ENCODE measurements at regions of chr10 and their contacts with region 1.

Region 1: DNA sequence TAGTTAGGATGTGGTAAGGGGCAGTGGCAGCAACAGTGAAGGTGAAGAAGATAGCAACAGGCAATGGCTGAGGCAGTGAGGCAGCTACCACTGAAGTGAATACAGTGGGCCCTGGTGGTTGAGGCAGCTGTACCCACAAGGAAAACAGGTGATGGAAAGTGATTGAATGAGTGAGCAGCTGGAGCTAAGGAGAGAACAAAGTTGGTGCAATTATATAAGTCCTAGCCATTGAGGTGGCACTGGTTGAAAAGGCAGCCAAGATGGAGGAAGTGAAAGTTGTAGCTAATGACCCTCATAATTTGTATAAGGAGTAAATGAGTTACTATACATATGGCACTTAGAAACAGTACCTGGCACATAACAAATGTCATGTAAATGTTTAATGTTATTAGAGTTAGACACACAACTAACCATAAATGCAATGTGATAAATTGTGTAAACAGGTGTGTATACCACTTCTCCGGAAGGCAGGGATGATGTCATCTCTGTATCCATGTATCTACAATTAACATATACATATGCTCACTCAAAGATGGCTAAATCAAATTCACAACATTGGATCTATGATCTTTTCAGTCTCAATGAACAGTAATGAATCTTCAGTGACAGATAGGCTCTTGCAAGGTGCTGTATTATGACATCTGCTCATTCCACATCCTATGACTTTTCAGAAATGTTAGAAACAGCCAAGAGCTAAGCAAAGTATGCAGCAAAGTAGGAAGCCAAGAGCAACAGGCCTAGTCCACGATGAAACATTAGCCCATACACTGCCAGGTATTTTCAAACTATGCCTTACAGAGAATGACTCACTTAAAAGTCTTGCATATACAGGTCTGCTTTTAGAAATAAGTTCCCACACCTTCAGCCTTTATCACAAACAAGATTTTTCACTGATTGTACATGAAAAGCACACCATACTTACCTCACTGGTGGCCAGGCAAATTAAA is 10.7 kb downstream of the XPNPEP1 start:
- DNase-seq: no peak
- ATAC-seq: no peak
- H3K4me3 ChIP-seq: no peak overlapping the region
- H3K27ac ChIP-seq: no peak overlapping the region
- H3K4me1 ChIP-seq: no peaks in the 10 kb centered on the region
- H3K27me3 ChIP-seq: no peaks in the 10 kb centered on the region
- CTCF ChIP-seq: no peak

Region 2: DNA sequence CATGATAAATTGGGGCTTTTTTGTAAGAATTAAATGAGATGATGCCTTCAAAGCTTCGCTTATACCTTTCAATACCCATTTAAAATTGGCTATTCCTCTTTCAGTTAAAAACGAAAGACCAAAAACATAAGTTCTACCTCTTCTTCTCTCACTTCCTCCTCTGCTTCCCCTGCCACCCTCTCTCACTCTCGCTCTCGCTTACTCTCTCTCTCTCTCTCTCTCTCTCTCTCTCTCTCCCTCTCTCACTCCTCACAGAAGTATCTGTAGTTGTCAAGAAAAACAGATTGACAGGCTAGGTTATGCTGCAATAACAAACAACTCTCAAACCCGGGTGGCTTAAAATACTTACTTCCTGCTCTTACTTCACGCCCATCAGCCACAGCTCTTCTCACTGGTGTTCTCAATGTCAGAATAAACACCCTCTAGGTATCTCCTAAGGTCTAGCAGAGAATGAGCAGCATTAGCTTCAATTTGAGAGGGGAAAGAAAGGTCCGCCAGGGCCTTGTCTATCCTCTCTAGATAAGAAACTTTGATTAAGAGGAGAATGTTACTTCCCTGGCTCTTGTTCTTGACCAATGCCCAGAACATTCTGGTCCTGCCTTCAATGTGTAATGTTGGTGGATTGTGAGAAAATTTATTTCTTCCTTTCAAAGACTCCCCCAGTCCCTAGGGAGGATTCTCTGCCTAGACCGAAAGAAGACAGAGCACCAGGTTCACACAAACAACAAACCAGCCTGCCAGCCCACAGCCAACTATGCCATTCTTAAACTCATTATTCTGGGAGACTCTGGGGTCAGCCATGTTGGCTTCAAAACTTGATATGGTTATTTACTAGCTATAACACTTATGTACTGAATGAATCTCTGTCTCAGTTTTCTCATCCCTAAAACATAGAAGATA is 1018.0 kb before region 1 on chr10:
- CTCF ChIA-PET with region 1: no interaction called
- POLR2A ChIA-PET with region 1: no interaction called
- in situ Hi-C with region 1: no loop called
- intact Hi-C with region 1: no loop called
- DNase-seq: no peak
- ATAC-seq: no peak
- H3K4me3 ChIP-seq: no peak overlapping the region
- H3K27ac ChIP-seq: no peak overlapping the region
- H3K4me1 ChIP-seq: no peaks in the 10 kb centered on the region
- H3K27me3 ChIP-seq: no peaks in the 10 kb centered on the region
- CTCF ChIP-seq: no peak

Region 3: GRCh38 chr10:109922976-109923921 is 10.6 kb after region 1 on chr10 and contains the start of gene XPNPEP1:
- CTCF ChIA-PET with region 1: no interaction called
- POLR2A ChIA-PET with region 1: no interaction called
- in situ Hi-C with region 1: no loop called
- intact Hi-C with region 1: no loop called
- DNase-seq: no peak
- ATAC-seq: peak; percentile 99
- H3K4me3 ChIP-seq: peak within 1 kb of the TSS; percentile 79 to 96
- H3K27ac ChIP-seq: peak within 1 kb of the TSS; percentile 91
- H3K4me1 ChIP-seq: peaks cover 12% of the 10 kb centered on the region
- H3K27me3 ChIP-seq: no peaks in the 10 kb centered on the region
- CTCF ChIP-seq: no peak
- total RNA-seq, gene XPNPEP1: 61.2 TPM

Region 4: GRCh38 chr10:110802090-110802489 is 889.5 kb after region 1 on chr10:
- CTCF ChIA-PET with region 1: no interaction called
- POLR2A ChIA-PET with region 1: interaction called, 14 read pairs
- in situ Hi-C with region 1: no loop called
- intact Hi-C with region 1: no loop called
- DNase-seq: no peak
- ATAC-seq: no peak
- H3K4me3 ChIP-seq: no peak overlapping the region
- H3K27ac ChIP-seq: no peak overlapping the region
- H3K4me1 ChIP-seq: peaks cover 2% of the 10 kb centered on the region; the same call in 1 of the 2 replicates
- H3K27me3 ChIP-seq: peaks cover 18% of the 10 kb centered on the region; the same call in 1 of the 2 replicates
- CTCF ChIP-seq: no peak